ENCODE measurements at regions of chr17 and their contacts with region 1.

Region 1: GRCh38 chr17:76264755-76265596 is at the start of gene UBALD2:
- DNase-seq: peak; percentile 99
- ATAC-seq: peak; percentile 96
- H3K4me3 ChIP-seq: peak within 1 kb of the TSS; percentile 70 to 82
- H3K27ac ChIP-seq: peak within 1 kb of the TSS; percentile 68
- H3K4me1 ChIP-seq: peaks cover 25 to 39% of the 10 kb centered on the region in 2 experiments
- H3K27me3 ChIP-seq: no peaks in the 10 kb centered on the region
- CTCF ChIP-seq: no peak
- POLR2A ChIP-seq: peak; percentile 69
- RAD21 ChIP-seq: no peak
- total RNA-seq, gene UBALD2: 94.3 TPM

Region 2: DNA sequence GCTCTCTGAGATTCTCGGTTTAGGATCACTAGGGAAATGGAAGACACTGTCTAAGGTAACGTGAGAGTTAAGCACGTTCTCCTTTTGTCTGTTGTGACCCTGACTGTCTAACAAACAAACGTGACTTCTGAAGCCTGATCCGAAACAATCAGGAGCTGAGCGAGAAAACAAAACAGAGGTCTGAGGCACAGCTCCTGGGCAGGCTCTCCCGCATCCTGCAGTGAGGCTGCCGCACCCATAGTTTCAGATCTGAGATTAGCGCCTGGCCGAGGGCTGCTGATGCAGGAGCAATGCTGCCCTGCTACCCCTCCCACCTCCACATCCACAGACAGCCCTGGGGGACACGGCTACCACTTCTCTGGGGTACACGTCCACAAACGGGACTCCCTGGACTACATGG is 71.4 kb before region 1 on chr17:
- CTCF ChIA-PET with region 1: no interaction called
- POLR2A ChIA-PET with region 1: no interaction called
- RAD21 ChIA-PET with region 1: no interaction called
- intact Hi-C with region 1: no loop called
- DNase-seq: no peak
- ATAC-seq: no peak
- H3K4me3 ChIP-seq: no peak overlapping the region
- H3K27ac ChIP-seq: no peak overlapping the region
- H3K4me1 ChIP-seq: peaks cover 3 to 4% of the 10 kb centered on the region in 2 experiments; a peak in 2 of 4 replicates
- H3K27me3 ChIP-seq: no peaks in the 10 kb centered on the region
- CTCF ChIP-seq: no peak
- POLR2A ChIP-seq: no peak
- RAD21 ChIP-seq: no peak

Region 3: GRCh38 chr17:76246080-76247066 is 18.6 kb before region 1 on chr17:
- CTCF ChIA-PET with region 1: no interaction called
- POLR2A ChIA-PET with region 1: interaction called, 13 read pairs
- RAD21 ChIA-PET with region 1: no interaction called
- intact Hi-C with region 1: no loop called
- DNase-seq: no peak
- ATAC-seq: no peak
- H3K4me3 ChIP-seq: no peak overlapping the region
- H3K27ac ChIP-seq: no peak overlapping the region
- H3K4me1 ChIP-seq: peaks cover 0 to 13% of the 10 kb centered on the region in 2 experiments; a peak in 3 of 4 replicates
- H3K27me3 ChIP-seq: no peaks in the 10 kb centered on the region
- CTCF ChIP-seq: no peak
- POLR2A ChIP-seq: no peak
- RAD21 ChIP-seq: no peak